Astrocyte of the spinal cord (primary cell): ENCODE measurements at regions of chr12 and their contacts with region 1.

Region 1: GRCh38 chr12:93419388-93420034 is 22.2 kb downstream of the UBE2N start:
- DNase-seq: peak; percentile 77
- H3K4me3 ChIP-seq: no peak overlapping the region
- CTCF ChIP-seq: peak; percentile 45

Region 2: DNA sequence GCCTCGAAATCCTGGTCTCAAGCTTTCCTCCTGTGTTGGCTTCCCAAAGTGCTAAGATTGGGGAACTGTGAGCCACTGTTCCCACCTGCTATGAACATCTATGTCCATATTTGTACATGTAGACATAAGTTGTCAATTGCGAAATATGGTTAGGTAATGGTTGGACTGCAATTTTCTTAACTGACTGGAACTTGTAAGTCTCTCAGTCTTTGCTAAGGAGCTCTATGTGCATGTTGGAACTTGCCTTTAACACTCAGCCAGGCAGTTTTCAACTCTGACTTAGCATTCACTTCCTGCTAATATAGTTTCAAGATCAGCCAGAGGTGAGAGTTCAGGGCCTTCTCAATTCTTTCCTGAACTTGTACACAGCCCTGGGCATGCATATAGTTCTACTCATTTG is 445.9 kb before region 1 on chr12:
- in situ Hi-C with region 1: loop called (anchors 25 kb)
- DNase-seq: peak; percentile 74
- H3K4me3 ChIP-seq: no peak overlapping the region
- CTCF ChIP-seq: no peak

Region 3: GRCh38 chr12:93603762-93604161 is 184.3 kb after region 1 on chr12:
- in situ Hi-C with region 1: no loop called
- DNase-seq: no peak
- H3K4me3 ChIP-seq: no peak overlapping the region
- CTCF ChIP-seq: no peak